KBM-7 (cell line): ENCODE measurements at regions of chr21 and their contacts with region 1.

Region 1: GRCh38 chr21:44742418-44743153 is 31.2 kb upstream of the TSPEAR start:
- DNase-seq: peak; percentile 38

Region 2: GRCh38 chr21:44531228-44532172 is 211.1 kb before region 1 on chr21:
- in situ Hi-C with region 1: loop called (anchors 25 kb)
- DNase-seq: no peak